ENCODE measurements at regions of chr13 and their contacts with region 1.

Region 1: GRCh38 chr13:59437902-59438301 is 725.8 kb downstream of the DIAPH3 start:
- DNase-seq: no peak
- ATAC-seq: no peak
- H3K4me3 ChIP-seq: no peak overlapping the region
- H3K27ac ChIP-seq: no peak overlapping the region
- H3K4me1 ChIP-seq: peaks cover 0 to 6% (median 0%) of the 10 kb centered on the region in 9 donors
- H3K27me3 ChIP-seq: no peaks in the 10 kb centered on the region
- CTCF ChIP-seq: no peak

Region 2: GRCh38 chr13:58994777-58995176 is 443.1 kb before region 1 on chr13:
- intact Hi-C with region 1: no loop called
- DNase-seq: no peak
- ATAC-seq: no peak
- H3K4me3 ChIP-seq: no peak overlapping the region
- H3K27ac ChIP-seq: no peak overlapping the region
- H3K4me1 ChIP-seq: no peaks in the 10 kb centered on the region
- H3K27me3 ChIP-seq: no peaks in the 10 kb centered on the region
- CTCF ChIP-seq: peak in 5 of 9 donors; percentile 9 to 33 (median 23)

Region 3: DNA sequence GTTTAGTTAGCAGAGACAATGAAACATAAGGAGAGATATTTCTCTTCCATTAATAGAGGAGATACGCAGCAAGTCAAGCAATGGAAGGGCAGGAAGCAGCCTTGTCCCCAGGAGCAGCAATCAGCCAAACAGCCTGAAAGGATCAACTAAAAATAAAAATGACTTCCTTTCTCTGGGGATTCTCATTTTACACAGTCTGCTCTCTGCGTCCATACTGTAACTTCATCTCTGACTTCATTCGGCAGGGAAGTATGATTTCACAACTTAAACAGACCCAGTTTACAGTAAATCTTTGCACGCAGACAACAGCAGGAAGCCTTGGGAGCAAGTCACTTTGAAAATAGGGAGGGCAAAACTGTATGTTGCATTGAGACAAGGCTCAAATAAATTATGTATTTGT is 100.8 kb before region 1 on chr13:
- intact Hi-C with region 1: no loop called
- DNase-seq: peak in 1 of 2 donors; percentile 28
- ATAC-seq: peak in 7 of 8 donors; percentile 72 to 94 (median 87)
- H3K4me3 ChIP-seq: no peak overlapping the region
- H3K27ac ChIP-seq: peak overlapping the region in 6 of 10 donors; percentile 8 to 78 (median 66)
- H3K4me1 ChIP-seq: peaks cover under 1 to 44% (median 22%) of the 10 kb centered on the region in 9 donors
- H3K27me3 ChIP-seq: no peaks in the 10 kb centered on the region
- CTCF ChIP-seq: no peak

Region 4: GRCh38 chr13:59409211-59409610 is 28.7 kb before region 1 on chr13:
- intact Hi-C with region 1: loop called in 1 of 10 experiments (anchors 5 kb)
- DNase-seq: peak; percentile 75
- ATAC-seq: peak in 7 of 8 donors; percentile 71 to 87 (median 80)
- H3K4me3 ChIP-seq: no peak overlapping the region
- H3K27ac ChIP-seq: peak overlapping the region in 4 of 10 donors; percentile 21 to 51 (median 28)
- H3K4me1 ChIP-seq: peaks cover 6 to 16% (median 9%) of the 10 kb centered on the region in 9 donors
- H3K27me3 ChIP-seq: no peaks in the 10 kb centered on the region
- CTCF ChIP-seq: no peak

Measured in heart right ventricle (tissue), 16 donors.